ENCODE measurements at regions of chr16 and their contacts with region 1.

Region 1: GRCh38 chr16:85610508-85611332 is 2.4 kb upstream of the GSE1 start:
- DNase-seq: peak; percentile 94
- ATAC-seq: peak; percentile 40
- H3K4me3 Mint-ChIP-seq: peak overlapping the region; percentile 68
- H3K27ac Mint-ChIP-seq: peak overlapping the region; percentile 97
- H3K4me1 Mint-ChIP-seq: peaks cover 49% of the 10 kb centered on the region
- H3K27me3 Mint-ChIP-seq: peaks cover 17% of the 10 kb centered on the region
- CTCF ChIP-seq: peak; percentile 96

Region 2: GRCh38 chr16:85356157-85356556 is 254.6 kb before region 1 on chr16:
- CTCF ChIA-PET with region 1: no interaction called
- POLR2A ChIA-PET with region 1: no interaction called
- DNase-seq: no peak
- ATAC-seq: no peak
- H3K4me3 Mint-ChIP-seq: no peak overlapping the region
- H3K27ac Mint-ChIP-seq: no peak overlapping the region
- H3K4me1 Mint-ChIP-seq: peaks cover 23% of the 10 kb centered on the region
- H3K27me3 Mint-ChIP-seq: no peaks in the 10 kb centered on the region
- CTCF ChIP-seq: no peak

Region 3: DNA sequence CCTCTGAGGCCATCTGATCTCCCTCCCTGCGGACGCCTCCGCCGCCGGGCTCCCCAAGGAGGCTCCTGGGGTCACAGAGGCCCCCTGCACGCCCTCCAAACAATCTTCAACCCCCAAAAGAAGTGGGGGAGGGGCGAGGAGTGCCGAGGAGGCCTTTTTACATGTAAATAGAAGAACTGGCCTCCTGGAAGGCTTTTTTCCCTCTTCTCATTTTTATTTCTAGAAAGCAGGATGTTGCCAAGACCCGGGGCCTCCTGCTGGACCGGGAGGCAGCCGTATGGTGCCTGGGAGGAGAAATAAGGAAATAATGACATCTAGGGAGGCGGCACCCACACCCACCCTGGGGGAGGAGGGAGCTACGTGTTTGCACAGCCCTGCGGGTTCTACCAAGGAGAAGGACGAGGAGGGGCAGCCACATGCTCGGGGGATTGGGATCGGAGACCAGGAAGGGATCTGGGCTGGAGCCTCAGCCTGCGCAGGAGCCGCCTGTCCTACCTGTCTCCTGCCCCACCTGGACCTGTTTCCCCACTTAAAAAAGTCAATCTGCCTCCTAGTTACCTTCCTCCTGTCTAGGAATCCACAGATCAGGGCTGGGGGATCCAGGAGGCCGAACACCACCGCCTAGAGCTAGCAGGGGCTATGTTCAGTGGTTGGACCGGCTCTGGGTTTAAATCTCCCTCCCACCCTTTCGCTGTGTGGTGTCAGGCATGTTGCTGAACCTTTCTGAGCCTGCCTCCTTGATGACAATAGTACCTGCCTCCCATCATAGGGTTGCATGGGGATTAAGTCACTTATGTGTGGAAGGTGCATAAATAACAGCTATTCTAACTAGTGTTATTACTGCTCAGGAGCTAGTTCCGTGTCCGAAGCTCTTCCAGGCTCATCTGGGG is 173.3 kb before region 1 on chr16:
- CTCF ChIA-PET with region 1: interaction called, 17 read pairs
- POLR2A ChIA-PET with region 1: no interaction called
- DNase-seq: no peak
- ATAC-seq: peak; percentile 21
- H3K4me3 Mint-ChIP-seq: peak overlapping the region; percentile 50
- H3K27ac Mint-ChIP-seq: peak overlapping the region; percentile 51; the same call in 1 of the 2 replicates
- H3K4me1 Mint-ChIP-seq: peaks cover 39% of the 10 kb centered on the region
- H3K27me3 Mint-ChIP-seq: no peaks in the 10 kb centered on the region
- CTCF ChIP-seq: no peak

Region 4: GRCh38 chr16:85528528-85529387 is 82.0 kb before region 1 on chr16:
- CTCF ChIA-PET with region 1: interaction called, 12 read pairs
- POLR2A ChIA-PET with region 1: no interaction called
- DNase-seq: no peak
- ATAC-seq: no peak
- H3K4me3 Mint-ChIP-seq: no peak overlapping the region
- H3K27ac Mint-ChIP-seq: peak overlapping the region; percentile 53; the same call in 1 of the 2 replicates
- H3K4me1 Mint-ChIP-seq: peaks cover 32% of the 10 kb centered on the region
- H3K27me3 Mint-ChIP-seq: no peaks in the 10 kb centered on the region
- CTCF ChIP-seq: peak; percentile 38; the same call in 1 of the 2 replicates

Region 5: DNA sequence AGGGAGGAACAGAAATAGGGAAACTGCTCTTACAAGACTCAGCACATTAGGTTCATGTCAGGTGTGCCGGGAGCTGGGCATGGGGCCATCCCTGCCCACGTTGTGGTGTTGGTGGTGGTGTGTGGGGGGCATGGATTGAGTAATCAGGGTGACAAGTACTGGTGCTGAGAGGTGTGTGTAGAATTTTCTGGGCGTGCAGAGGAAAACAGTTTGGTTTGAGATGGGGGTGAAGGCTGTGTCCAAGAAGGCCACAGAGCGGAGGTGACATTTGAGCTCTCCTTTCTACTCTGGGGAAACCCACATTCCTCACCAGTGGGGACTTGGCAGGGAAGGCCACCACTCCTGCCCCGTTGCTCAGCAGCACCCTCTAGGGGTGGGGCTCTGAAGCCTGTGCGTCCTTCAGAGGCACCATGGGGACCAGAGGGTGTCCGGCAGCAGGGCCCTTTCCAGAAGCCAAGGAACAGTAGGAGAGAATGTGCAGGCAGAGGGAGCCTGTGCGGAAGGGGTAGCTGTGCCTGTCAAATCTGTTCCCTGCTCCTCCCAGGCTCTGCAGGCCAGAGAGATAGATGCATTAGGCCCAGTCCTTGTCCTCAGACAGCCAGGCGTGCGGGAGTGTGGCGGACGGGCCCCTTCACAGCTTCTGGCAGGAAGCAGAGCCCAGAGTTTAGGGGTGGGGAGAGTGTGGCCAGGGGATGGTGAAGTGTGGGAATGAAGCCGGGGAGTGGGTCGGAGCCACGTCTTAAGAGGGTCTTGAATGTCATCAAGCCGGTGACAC is 46.3 kb before region 1 on chr16:
- CTCF ChIA-PET with region 1: interaction called, 17 read pairs
- POLR2A ChIA-PET with region 1: interaction called, 7 read pairs
- DNase-seq: no peak
- ATAC-seq: no peak
- H3K4me3 Mint-ChIP-seq: no peak overlapping the region
- H3K27ac Mint-ChIP-seq: peak overlapping the region; percentile 73
- H3K4me1 Mint-ChIP-seq: peaks cover 83% of the 10 kb centered on the region
- H3K27me3 Mint-ChIP-seq: no peaks in the 10 kb centered on the region
- CTCF ChIP-seq: peak; percentile 58

Region 6: GRCh38 chr16:85569615-85570212 is 41.0 kb before region 1 on chr16:
- CTCF ChIA-PET with region 1: interaction called, 17 read pairs
- POLR2A ChIA-PET with region 1: interaction called, 7 read pairs
- DNase-seq: no peak
- ATAC-seq: peak; percentile 63
- H3K4me3 Mint-ChIP-seq: no peak overlapping the region
- H3K27ac Mint-ChIP-seq: peak overlapping the region; percentile 95
- H3K4me1 Mint-ChIP-seq: peaks cover 78% of the 10 kb centered on the region
- H3K27me3 Mint-ChIP-seq: no peaks in the 10 kb centered on the region
- CTCF ChIP-seq: no peak